Colonic mucosa (tissue), 4 donors: ENCODE measurements at regions of chr19 and their contacts with region 1.

Region 1: GRCh38 chr19:11987405-11988281 is 22.8 kb downstream of the ZNF763 start:
- DNase-seq: peak; percentile 98
- H3K4me3 ChIP-seq: peak overlapping the region; percentile 64
- H3K27ac ChIP-seq: peak overlapping the region; percentile 73
- H3K4me1 ChIP-seq: no peaks in the 10 kb centered on the region
- H3K27me3 ChIP-seq: no peaks in the 10 kb centered on the region
- CTCF ChIP-seq: no peak

Region 2: DNA sequence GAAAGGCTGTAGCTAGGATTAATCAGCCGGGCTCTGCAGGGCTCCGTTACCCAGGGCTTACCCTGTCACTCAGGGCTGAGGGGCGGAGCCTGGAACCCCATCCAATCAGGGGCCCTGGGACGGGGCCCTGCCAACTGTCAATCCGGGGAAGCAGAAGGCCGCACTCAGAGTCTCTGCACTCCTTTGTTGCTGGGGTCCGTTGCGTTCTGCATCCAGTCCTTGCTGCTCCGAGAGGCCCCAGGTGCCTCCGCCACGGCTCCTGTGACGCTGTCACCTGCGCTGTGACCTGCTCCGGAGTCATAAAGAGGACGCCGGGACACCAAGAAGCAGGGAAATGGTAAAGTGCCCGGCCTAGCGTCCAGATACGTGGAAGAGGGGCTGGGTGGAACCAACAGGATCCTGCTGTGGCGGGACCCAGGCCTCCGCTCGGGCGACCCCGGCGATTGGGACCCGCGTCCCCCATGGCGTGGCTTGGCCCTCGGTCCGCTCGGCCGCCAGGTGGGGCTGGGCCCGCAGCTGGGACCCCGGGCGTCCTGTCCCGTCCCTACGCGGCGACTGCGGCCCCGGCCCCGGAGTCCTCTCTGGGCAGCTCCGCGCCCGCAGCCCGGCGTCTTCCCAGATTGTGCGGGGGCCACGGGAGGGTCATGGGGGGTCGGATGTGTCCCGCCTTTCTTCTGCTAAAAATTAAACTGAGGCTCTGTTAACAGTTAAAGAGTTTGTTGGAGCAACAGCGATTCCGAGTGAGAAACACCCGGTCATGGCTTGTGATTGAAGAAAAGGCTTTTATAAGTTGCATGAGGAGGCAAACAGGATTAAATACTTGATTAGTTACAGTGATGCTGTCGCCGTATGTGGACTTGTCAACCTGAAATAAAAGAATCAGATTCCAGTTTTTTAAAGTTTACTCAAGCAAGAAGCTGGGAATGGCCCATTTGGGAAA is 189.0 kb before region 1 on chr19 and contains the start of gene ZNF491:
- intact Hi-C with region 1: loop called (anchors 5 kb)
- DNase-seq: peak; percentile 97
- H3K4me3 ChIP-seq: peak within 1 kb of the TSS; percentile 80
- H3K27ac ChIP-seq: peak within 1 kb of the TSS; percentile 70
- H3K4me1 ChIP-seq: peaks cover 6% of the 10 kb centered on the region
- H3K27me3 ChIP-seq: no peaks in the 10 kb centered on the region
- CTCF ChIP-seq: no peak
- total RNA-seq, gene ZNF491: 1.9 TPM

Region 3: DNA sequence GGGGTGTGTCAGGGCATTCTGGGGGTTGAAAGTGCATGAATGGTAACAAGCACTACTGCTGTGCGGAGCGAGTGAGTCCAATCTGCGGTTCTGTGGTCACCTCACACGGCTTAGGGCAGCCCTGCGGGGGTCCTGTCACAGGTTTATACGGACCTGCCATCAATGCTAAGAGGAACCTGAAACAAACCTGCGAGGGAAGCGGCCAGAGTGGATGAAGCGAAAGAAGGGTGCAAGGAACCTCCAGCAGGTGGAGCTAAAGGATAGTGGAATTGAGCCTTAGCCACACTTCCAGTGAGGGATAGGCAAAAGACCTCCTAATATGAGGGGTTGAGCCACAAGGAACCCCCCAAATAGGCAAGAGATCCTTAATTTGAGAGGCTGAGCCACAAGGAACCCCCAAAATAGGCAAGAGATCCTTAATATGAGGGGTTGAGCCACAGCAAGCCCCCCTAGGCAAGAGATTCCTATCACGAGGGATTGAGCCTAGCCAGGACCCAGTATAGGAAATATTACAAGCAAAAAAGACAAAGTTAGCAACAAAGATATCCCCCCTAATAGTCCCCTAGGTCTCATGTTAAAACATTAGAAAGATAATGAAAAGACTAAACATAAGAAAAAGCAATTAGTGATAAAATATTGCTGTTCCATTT is 106.4 kb before region 1 on chr19:
- intact Hi-C with region 1: loop called (anchors 2 kb)
- DNase-seq: peak; percentile 76
- H3K4me3 ChIP-seq: no peak overlapping the region
- H3K27ac ChIP-seq: no peak overlapping the region
- H3K4me1 ChIP-seq: no peaks in the 10 kb centered on the region
- H3K27me3 ChIP-seq: no peaks in the 10 kb centered on the region
- CTCF ChIP-seq: peak; percentile 62

Region 4: GRCh38 chr19:11924886-11925650 is 62.6 kb before region 1 on chr19 and contains the start of gene ZNF700:
- intact Hi-C with region 1: loop called (anchors 2 kb)
- DNase-seq: peak; percentile 99
- H3K4me3 ChIP-seq: peak within 1 kb of the TSS; percentile 97
- H3K27ac ChIP-seq: peak within 1 kb of the TSS; percentile 99
- H3K4me1 ChIP-seq: no peaks in the 10 kb centered on the region
- H3K27me3 ChIP-seq: no peaks in the 10 kb centered on the region
- CTCF ChIP-seq: no peak
- total RNA-seq, gene ZNF700: 13.4 to 17.1 TPM

Region 5: GRCh38 chr19:11964858-11965645 is 22.6 kb before region 1 on chr19 and contains the start of gene ZNF763:
- intact Hi-C with region 1: loop called (anchors 2 kb)
- DNase-seq: peak; percentile 99
- H3K4me3 ChIP-seq: peak within 1 kb of the TSS; percentile 63
- H3K27ac ChIP-seq: peak within 1 kb of the TSS; percentile 92
- H3K4me1 ChIP-seq: peaks cover 7% of the 10 kb centered on the region
- H3K27me3 ChIP-seq: no peaks in the 10 kb centered on the region
- CTCF ChIP-seq: no peak
- total RNA-seq, gene ZNF763: 2.5 to 4.1 TPM

Region 6: GRCh38 chr19:12139885-12140547 is 152.4 kb after region 1 on chr19 and contains the start of gene ZNF20:
- intact Hi-C with region 1: loop called (anchors 5 kb)
- DNase-seq: peak; percentile 99
- H3K4me3 ChIP-seq: peak within 1 kb of the TSS; percentile 77
- H3K27ac ChIP-seq: peak within 1 kb of the TSS; percentile 81
- H3K4me1 ChIP-seq: peaks cover 13% of the 10 kb centered on the region
- H3K27me3 ChIP-seq: no peaks in the 10 kb centered on the region
- CTCF ChIP-seq: no peak
- total RNA-seq, gene ZNF20: 3.4 to 4.8 TPM